AG04450 (cell line): ENCODE measurements at regions of chr1 and their contacts with region 1.

Region 1: DNA sequence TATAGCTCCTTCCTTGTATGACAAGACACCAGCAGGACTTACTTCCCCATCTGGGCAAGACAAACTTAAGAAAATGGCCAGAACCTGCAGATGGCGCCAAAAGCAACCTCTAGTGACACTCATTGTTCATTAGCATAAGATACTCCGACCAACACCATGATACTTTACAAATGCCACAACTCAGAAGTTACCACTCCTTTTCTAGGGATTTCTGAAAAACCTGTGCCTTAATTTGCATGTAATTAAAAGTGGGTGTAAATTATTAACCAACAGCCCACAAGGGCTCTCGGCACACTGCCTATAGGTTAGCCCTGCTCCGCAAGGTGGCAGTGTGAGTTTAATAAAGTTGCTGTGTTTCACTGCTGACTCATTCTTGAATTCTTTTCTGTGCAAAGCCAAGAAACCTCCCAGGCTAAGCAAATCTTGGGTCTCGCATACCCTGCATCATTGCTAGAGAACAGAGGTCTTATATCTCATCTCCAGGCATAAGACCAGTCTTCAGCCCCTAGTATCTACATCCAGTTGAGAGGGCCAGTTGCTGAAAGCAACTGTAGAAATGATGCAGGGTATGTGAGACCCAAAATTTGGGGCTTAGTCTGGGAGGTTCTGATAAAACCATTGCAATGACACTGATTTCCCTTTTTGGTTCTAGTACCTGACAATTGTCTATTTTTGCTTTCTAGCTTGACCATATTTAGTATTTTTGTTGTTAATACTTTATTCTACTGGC is 86.4 kb downstream of the FAF1 start:
- DNase-seq: peak; percentile 18
- H3K4me3 ChIP-seq: peak overlapping the region; percentile 14; the same call in 1 of the 2 replicates
- H3K27ac ChIP-seq: no peak overlapping the region
- H3K27me3 ChIP-seq: no peaks in the 10 kb centered on the region
- CTCF ChIP-seq: peak; percentile 71

Region 2: DNA sequence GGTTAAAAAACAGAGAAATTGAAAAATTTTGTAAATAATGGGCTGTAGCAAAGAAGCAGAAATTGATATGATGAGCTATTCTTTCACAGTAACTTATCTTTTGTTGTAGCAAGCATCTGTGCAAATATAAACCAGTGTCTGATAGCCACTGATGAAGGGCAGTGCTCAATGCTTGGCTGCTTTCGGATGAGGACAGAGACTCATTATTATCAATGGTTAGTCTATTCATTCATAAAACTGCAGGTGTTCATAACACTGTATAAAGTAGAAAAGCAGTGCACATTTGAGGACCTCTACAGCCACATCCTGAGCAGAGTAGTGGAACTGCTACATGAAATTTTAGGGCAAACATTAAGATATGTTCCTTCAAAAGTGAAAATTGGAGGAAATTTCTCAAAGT is 20.7 kb before region 1 on chr1:
- CTCF ChIA-PET with region 1: interaction called, 18 read pairs
- POLR2A ChIA-PET with region 1: no interaction called
- DNase-seq: no peak
- H3K4me3 ChIP-seq: no peak overlapping the region
- H3K27ac ChIP-seq: no peak overlapping the region
- H3K27me3 ChIP-seq: no peaks in the 10 kb centered on the region
- CTCF ChIP-seq: no peak

Region 3: DNA sequence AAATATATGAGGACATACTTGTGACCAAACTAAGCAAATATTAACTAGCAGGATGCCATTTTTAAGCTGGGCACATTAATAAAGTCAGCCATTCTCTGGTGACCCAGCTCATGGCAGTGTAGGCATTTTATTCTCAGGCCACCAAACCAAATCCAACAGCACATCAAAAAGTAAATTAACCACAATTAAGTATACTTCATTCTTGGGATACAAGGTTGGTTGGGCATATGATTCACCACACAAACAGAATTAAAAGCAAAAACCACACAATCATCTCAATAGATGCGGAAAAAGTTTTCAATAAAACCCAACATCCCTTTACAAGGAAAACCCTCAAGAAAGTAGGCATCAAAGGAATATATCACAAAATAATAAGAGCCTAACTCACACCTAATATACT is 14.9 kb before region 1 on chr1:
- CTCF ChIA-PET with region 1: interaction called, 18 read pairs
- POLR2A ChIA-PET with region 1: no interaction called
- DNase-seq: no peak
- H3K4me3 ChIP-seq: no peak overlapping the region
- H3K27ac ChIP-seq: no peak overlapping the region
- H3K27me3 ChIP-seq: no peaks in the 10 kb centered on the region
- CTCF ChIP-seq: no peak